ENCODE measurements at regions of chr18 and their contacts with region 1.

Region 1: GRCh38 chr18:49561289-49562193 is at the start of gene LIPG:
- DNase-seq: peak; percentile 74
- H3K4me3 ChIP-seq: peak within 1 kb of the TSS; percentile 34 to 83 (median 67)
- H3K27ac ChIP-seq: peak within 1 kb of the TSS; percentile 49
- H3K4me1 ChIP-seq: peaks cover 37% of the 10 kb centered on the region
- H3K27me3 ChIP-seq: no peaks in the 10 kb centered on the region
- CTCF ChIP-seq: no peak
- POLR2A ChIP-seq: peak; percentile 69
- total RNA-seq, gene LIPG: 80.6 and 96.2 TPM in 2 replicates

Region 2: GRCh38 chr18:49645841-49646351 is 84.4 kb after region 1 on chr18:
- CTCF ChIA-PET with region 1: no interaction called
- POLR2A ChIA-PET with region 1: no interaction called
- dilution Hi-C with region 1: no loop called
- intact Hi-C with region 1: loop called (anchors 5 kb)
- DNase-seq: no peak
- H3K4me3 ChIP-seq: no peak overlapping the region
- H3K27ac ChIP-seq: no peak overlapping the region
- H3K4me1 ChIP-seq: peaks cover 10% of the 10 kb centered on the region
- H3K27me3 ChIP-seq: no peaks in the 10 kb centered on the region
- CTCF ChIP-seq: no peak
- POLR2A ChIP-seq: no peak

Region 3: GRCh38 chr18:49690307-49690706 is 128.8 kb after region 1 on chr18:
- CTCF ChIA-PET with region 1: interaction called, 6 read pairs
- POLR2A ChIA-PET with region 1: interaction called, 3 read pairs
- dilution Hi-C with region 1: no loop called
- intact Hi-C with region 1: loop called (anchors 1 kb)
- DNase-seq: peak; percentile 78
- H3K4me3 ChIP-seq: peak overlapping the region in 1 of 3 experiments; percentile 34
- H3K27ac ChIP-seq: peak overlapping the region; percentile 97
- H3K4me1 ChIP-seq: peaks cover 48% of the 10 kb centered on the region
- H3K27me3 ChIP-seq: no peaks in the 10 kb centered on the region
- CTCF ChIP-seq: no peak
- POLR2A ChIP-seq: no peak

Region 4: GRCh38 chr18:49728542-49728941 is 167.0 kb after region 1 on chr18:
- CTCF ChIA-PET with region 1: interaction called, 49 read pairs
- POLR2A ChIA-PET with region 1: no interaction called
- dilution Hi-C with region 1: no loop called
- intact Hi-C with region 1: loop called (anchors 1 kb)
- DNase-seq: peak; percentile 54
- H3K4me3 ChIP-seq: no peak overlapping the region
- H3K27ac ChIP-seq: no peak overlapping the region
- H3K4me1 ChIP-seq: peaks cover 33% of the 10 kb centered on the region
- H3K27me3 ChIP-seq: no peaks in the 10 kb centered on the region
- CTCF ChIP-seq: peak; percentile 84 to 87
- POLR2A ChIP-seq: no peak

Region 5: GRCh38 chr18:49768051-49768391 is 206.5 kb after region 1 on chr18:
- CTCF ChIA-PET with region 1: interaction called, 18 read pairs
- POLR2A ChIA-PET with region 1: no interaction called
- dilution Hi-C with region 1: no loop called
- intact Hi-C with region 1: loop called (anchors 1 kb)
- DNase-seq: peak; percentile 62
- H3K4me3 ChIP-seq: no peak overlapping the region
- H3K27ac ChIP-seq: no peak overlapping the region
- H3K4me1 ChIP-seq: no peaks in the 10 kb centered on the region
- H3K27me3 ChIP-seq: no peaks in the 10 kb centered on the region
- CTCF ChIP-seq: peak; percentile 69 to 75
- POLR2A ChIP-seq: no peak

Region 6: DNA sequence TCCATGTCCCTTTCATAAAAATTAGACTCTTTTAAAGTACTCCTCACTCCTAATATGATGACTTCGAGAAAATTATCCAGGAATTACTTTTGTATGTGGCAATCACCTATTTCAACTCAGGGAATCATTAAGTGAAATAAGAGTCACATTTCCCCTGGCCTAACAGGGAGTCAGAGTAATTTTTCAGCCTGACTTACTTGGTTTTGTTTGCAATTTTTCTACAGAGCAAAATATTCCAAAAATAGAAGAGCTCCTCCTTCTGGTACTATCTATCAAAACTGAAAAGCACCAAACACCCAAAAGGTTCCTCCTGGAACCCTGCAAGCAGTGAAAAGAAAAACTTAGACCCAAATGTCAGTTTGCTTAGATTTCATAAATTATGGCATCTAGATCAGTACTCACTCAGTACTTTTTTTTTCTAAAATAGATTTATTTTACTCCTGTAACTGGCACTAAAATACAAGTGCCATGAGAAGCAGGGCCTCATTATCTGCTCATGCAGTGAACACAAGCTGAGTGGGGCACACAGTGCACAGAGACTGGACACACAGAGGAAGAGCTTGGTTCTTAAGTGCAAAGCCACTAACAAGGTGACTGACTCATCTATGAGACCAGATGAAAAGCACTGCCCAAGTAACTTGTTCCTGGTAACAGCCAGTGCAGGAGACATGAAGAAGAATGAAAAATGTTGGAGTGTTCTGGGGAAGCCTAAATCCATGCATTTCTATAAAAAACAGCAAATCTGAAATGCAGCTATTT is 223.1 kb after region 1 on chr18:
- CTCF ChIA-PET with region 1: interaction called, 18 read pairs
- POLR2A ChIA-PET with region 1: no interaction called
- dilution Hi-C with region 1: no loop called
- intact Hi-C with region 1: loop called (anchors 1 kb)
- DNase-seq: no peak
- H3K4me3 ChIP-seq: no peak overlapping the region
- H3K27ac ChIP-seq: no peak overlapping the region
- H3K4me1 ChIP-seq: peaks cover 8% of the 10 kb centered on the region
- H3K27me3 ChIP-seq: no peaks in the 10 kb centered on the region
- CTCF ChIP-seq: no peak
- POLR2A ChIP-seq: no peak

Region 7: GRCh38 chr18:49813319-49814146 is 252.0 kb after region 1 on chr18 and contains the start of gene ACAA2:
- CTCF ChIA-PET with region 1: interaction called, 3 read pairs
- POLR2A ChIA-PET with region 1: no interaction called
- dilution Hi-C with region 1: no loop called
- intact Hi-C with region 1: loop called (anchors 1 kb)
- DNase-seq: peak; percentile 83
- H3K4me3 ChIP-seq: peak within 1 kb of the TSS; percentile 48 to 75 (median 64)
- H3K27ac ChIP-seq: peak within 1 kb of the TSS; percentile 94
- H3K4me1 ChIP-seq: peaks cover 12% of the 10 kb centered on the region
- H3K27me3 ChIP-seq: no peaks in the 10 kb centered on the region
- CTCF ChIP-seq: no peak
- POLR2A ChIP-seq: peak; percentile 93
- total RNA-seq, gene ACAA2: 44.4 and 44.9 TPM in 2 replicates